ENCODE measurements at regions of chr12 and their contacts with region 1.

Region 1: GRCh38 chr12:71415336-71416231 is 24.0 kb upstream of the LGR5 start:
- DNase-seq: peak; percentile 68
- H3K4me3 ChIP-seq: no peak overlapping the region
- H3K27ac ChIP-seq: no peak overlapping the region
- H3K4me1 ChIP-seq: no peaks in the 10 kb centered on the region
- H3K27me3 ChIP-seq: no peaks in the 10 kb centered on the region
- CTCF ChIP-seq: peak; percentile 91
- EP300 ChIP-seq: no peak
- RAD21 ChIP-seq: peak; percentile 90

Region 2: GRCh38 chr12:71400481-71400880 is 15.1 kb before region 1 on chr12:
- CTCF ChIA-PET with region 1: interaction called, 19 read pairs
- POLR2A ChIA-PET with region 1: no interaction called
- DNase-seq: no peak
- H3K4me3 ChIP-seq: no peak overlapping the region
- H3K27ac ChIP-seq: no peak overlapping the region
- H3K4me1 ChIP-seq: peaks cover 0 to 8% of the 10 kb centered on the region in 2 experiments; a peak in 3 of 4 replicates
- H3K27me3 ChIP-seq: no peaks in the 10 kb centered on the region
- CTCF ChIP-seq: no peak
- EP300 ChIP-seq: no peak
- RAD21 ChIP-seq: no peak

Region 3: GRCh38 chr12:71551529-71551928 is 135.9 kb after region 1 on chr12:
- CTCF ChIA-PET with region 1: interaction called, 86 read pairs
- POLR2A ChIA-PET with region 1: no interaction called
- DNase-seq: peak; percentile 22
- H3K4me3 ChIP-seq: no peak overlapping the region
- H3K27ac ChIP-seq: no peak overlapping the region
- H3K4me1 ChIP-seq: no peaks in the 10 kb centered on the region; a peak in 1 of 4 replicates
- H3K27me3 ChIP-seq: no peaks in the 10 kb centered on the region
- CTCF ChIP-seq: peak; percentile 58
- EP300 ChIP-seq: no peak
- RAD21 ChIP-seq: peak; percentile 81

Region 4: GRCh38 chr12:71636704-71637115 is 221.1 kb after region 1 on chr12:
- CTCF ChIA-PET with region 1: interaction called, 31 read pairs
- POLR2A ChIA-PET with region 1: no interaction called
- DNase-seq: peak; percentile 53
- H3K4me3 ChIP-seq: no peak overlapping the region
- H3K27ac ChIP-seq: no peak overlapping the region; a peak in 1 of 4 replicates
- H3K4me1 ChIP-seq: peaks cover 0 to 5% of the 10 kb centered on the region in 2 experiments; a peak in 2 of 4 replicates
- H3K27me3 ChIP-seq: no peaks in the 10 kb centered on the region
- CTCF ChIP-seq: peak; percentile 84
- EP300 ChIP-seq: no peak
- RAD21 ChIP-seq: peak; percentile 85